Activated naive CD4-positive, alpha-beta T cell treated with anti-CD3 and anti-CD28 coated beads for 36 hours (primary cell): ENCODE measurements at regions of chr16 and their contacts with region 1.

Region 1: GRCh38 chr16:50665128-50665878 is 15.8 kb downstream of the SNX20 start:
- DNase-seq: peak; percentile 89
- H3K4me3 Mint-ChIP-seq: peak overlapping the region; percentile 57
- H3K27ac Mint-ChIP-seq: peak overlapping the region; percentile 72
- H3K4me1 Mint-ChIP-seq: peaks cover 29% of the 10 kb centered on the region
- H3K27me3 Mint-ChIP-seq: no peaks in the 10 kb centered on the region

Region 2: GRCh38 chr16:50266337-50267091 is 398.8 kb before region 1 on chr16 and contains the start of gene ADCY7:
- CTCF ChIA-PET with region 1: interaction called, 4 read pairs
- intact Hi-C with region 1: loop called (anchors 2 kb)
- DNase-seq: peak; percentile 91
- H3K4me3 Mint-ChIP-seq: peak within 1 kb of the TSS; percentile 86
- H3K27ac Mint-ChIP-seq: peak within 1 kb of the TSS; percentile 94
- H3K4me1 Mint-ChIP-seq: peaks cover 60% of the 10 kb centered on the region
- H3K27me3 Mint-ChIP-seq: peaks cover 3% of the 10 kb centered on the region
- total RNA-seq, gene ADCY7: 73.4 to 89.6 TPM

Region 3: DNA sequence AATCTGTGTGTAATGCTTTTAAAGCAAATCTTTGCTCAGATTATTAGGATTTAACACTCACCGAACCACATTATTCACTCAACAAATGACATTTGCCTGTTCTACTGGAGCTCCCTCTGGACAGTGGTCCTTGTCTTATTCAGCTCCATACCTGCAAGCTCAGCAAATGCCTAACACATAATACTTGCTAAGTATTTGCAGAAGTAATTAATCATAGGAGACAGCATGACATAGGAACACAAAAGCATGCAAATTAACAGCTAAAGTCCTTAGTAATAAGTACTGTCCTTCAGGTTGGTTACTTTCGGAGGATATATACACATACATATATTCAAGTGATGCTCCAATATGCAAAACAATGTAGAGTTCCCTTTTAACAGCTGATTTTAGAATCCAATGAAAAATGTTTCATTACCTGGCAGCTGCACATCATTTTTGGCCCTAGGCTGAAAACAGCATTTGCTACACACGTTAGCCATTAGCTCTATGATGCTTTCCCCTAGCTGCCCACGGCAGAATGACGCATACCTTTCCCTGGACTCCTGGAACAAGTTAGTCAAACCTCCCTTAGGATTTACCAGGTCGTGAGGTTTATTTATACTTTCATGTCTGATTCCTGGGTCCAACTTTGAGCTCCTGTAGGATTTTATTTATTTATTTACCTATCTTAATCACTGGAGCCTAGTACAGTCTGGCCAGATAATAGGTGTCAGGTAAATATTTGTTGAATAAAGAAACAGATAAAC is 305.1 kb before region 1 on chr16:
- CTCF ChIA-PET with region 1: interaction called, 18 read pairs
- intact Hi-C with region 1: no loop called
- DNase-seq: no peak
- H3K4me3 Mint-ChIP-seq: no peak overlapping the region
- H3K27ac Mint-ChIP-seq: no peak overlapping the region
- H3K4me1 Mint-ChIP-seq: peaks cover 48% of the 10 kb centered on the region
- H3K27me3 Mint-ChIP-seq: no peaks in the 10 kb centered on the region

Region 4: GRCh38 chr16:50419116-50419515 is 246.2 kb before region 1 on chr16:
- CTCF ChIA-PET with region 1: no interaction called
- intact Hi-C with region 1: no loop called
- DNase-seq: no peak
- H3K4me3 Mint-ChIP-seq: no peak overlapping the region
- H3K27ac Mint-ChIP-seq: no peak overlapping the region
- H3K4me1 Mint-ChIP-seq: no peaks in the 10 kb centered on the region
- H3K27me3 Mint-ChIP-seq: peaks cover 2% of the 10 kb centered on the region

Region 5: DNA sequence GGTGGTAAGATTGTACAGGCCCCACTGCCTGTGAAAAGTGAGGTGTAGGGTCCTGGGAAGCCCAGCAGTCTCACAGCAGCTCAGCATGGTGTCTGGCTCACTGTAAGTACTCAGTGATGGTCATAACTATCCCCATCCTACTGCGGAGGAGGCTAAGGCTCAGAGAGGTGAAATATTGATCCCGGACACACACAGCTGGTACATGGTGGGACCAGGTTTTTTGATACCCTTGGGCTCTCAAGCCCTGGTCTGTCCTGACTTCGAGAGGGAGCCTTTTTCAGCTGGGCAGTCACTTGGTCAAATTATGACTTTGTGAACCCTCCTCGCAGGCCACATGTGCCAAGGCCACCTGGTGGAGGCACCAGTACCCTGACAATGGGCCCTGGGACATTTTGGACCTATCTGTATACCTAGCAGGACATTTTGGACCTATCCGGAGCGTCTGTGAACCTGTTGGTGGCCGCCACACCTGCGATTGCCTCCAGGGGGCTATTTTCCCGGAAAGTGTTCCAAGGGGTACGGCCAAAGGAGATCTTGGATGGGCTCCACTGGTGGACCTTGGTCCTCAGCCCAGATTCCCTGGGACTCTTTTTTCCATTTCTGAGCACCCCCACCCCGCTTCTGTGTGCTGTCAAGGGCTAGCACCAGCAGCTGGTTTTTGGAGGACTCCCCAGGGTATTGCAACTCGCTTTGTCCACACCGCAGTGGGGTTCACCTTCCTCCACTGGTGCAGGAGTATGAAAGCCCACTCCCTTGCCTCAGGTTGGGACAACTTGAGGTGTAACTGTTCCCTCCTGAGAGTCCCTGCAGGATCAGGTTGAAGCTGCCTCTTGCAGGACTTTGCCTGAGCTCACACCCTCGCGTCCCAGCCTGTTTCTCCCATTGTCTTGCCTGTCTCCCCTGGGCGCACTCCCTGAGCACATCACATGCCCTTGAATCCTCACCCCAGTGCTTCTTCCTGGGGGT is 200.7 kb before region 1 on chr16:
- CTCF ChIA-PET with region 1: no interaction called
- intact Hi-C with region 1: no loop called
- DNase-seq: no peak
- H3K4me3 Mint-ChIP-seq: no peak overlapping the region
- H3K27ac Mint-ChIP-seq: no peak overlapping the region
- H3K4me1 Mint-ChIP-seq: peaks cover 4% of the 10 kb centered on the region
- H3K27me3 Mint-ChIP-seq: peaks cover 12% of the 10 kb centered on the region

Region 6: GRCh38 chr16:50548125-50548908 is 117.0 kb before region 1 on chr16 and contains the start of gene NKD1:
- CTCF ChIA-PET with region 1: interaction called, 4 read pairs
- intact Hi-C with region 1: loop called (anchors 1 kb)
- DNase-seq: peak; percentile 68
- H3K4me3 Mint-ChIP-seq: peak within 1 kb of the TSS; percentile 85
- H3K27ac Mint-ChIP-seq: no peak within 1 kb of the TSS
- H3K4me1 Mint-ChIP-seq: peaks cover 18% of the 10 kb centered on the region
- H3K27me3 Mint-ChIP-seq: no peaks in the 10 kb centered on the region
- total RNA-seq, gene NKD1: 2.6 to 3.2 TPM

Region 7: DNA sequence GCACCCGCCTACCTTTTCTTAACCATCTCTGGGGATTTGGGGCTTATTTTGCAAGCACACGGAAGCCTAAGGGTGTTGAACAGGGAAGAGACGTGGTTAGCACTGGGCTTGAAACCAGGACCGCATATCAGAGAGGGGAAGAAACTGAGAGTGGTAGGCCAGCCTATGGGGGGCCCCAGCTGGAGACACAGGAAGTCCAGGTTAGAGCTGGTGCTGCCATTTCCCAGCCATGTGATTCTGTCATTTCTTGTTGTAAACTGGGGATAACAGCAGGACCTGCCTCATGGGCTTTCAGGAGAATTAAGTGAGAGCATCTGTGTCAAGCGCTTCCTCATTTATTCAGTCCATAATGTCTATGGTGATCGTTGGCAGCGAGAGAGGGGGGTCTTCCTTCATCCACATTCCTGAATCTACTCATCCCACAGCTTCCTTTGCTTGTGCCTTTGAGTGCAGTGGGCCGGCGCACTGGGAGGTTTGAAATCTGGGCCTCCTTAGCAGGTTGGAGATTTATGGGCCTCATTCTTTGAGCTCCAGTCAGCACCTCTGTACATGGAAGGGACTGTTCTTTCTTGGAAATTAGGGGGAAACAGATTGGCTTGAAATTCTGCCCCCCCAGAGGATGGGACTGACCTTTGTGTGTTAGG is 97.0 kb before region 1 on chr16:
- CTCF ChIA-PET with region 1: no interaction called
- intact Hi-C with region 1: no loop called
- DNase-seq: no peak
- H3K4me3 Mint-ChIP-seq: no peak overlapping the region
- H3K27ac Mint-ChIP-seq: no peak overlapping the region
- H3K4me1 Mint-ChIP-seq: peaks cover 16% of the 10 kb centered on the region
- H3K27me3 Mint-ChIP-seq: no peaks in the 10 kb centered on the region

Region 8: GRCh38 chr16:50709053-50709684 is 43.9 kb after region 1 on chr16:
- CTCF ChIA-PET with region 1: interaction called, 12 read pairs
- intact Hi-C with region 1: no loop called
- DNase-seq: no peak
- H3K4me3 Mint-ChIP-seq: peak overlapping the region; percentile 41
- H3K27ac Mint-ChIP-seq: peak overlapping the region; percentile 77
- H3K4me1 Mint-ChIP-seq: peaks cover 43% of the 10 kb centered on the region
- H3K27me3 Mint-ChIP-seq: no peaks in the 10 kb centered on the region

Region 9: GRCh38 chr16:50776037-50776436 is 110.7 kb after region 1 on chr16:
- CTCF ChIA-PET with region 1: interaction called, 11 read pairs
- intact Hi-C with region 1: no loop called
- DNase-seq: peak; percentile 27
- H3K4me3 Mint-ChIP-seq: no peak overlapping the region
- H3K27ac Mint-ChIP-seq: no peak overlapping the region
- H3K4me1 Mint-ChIP-seq: peaks cover 70% of the 10 kb centered on the region
- H3K27me3 Mint-ChIP-seq: no peaks in the 10 kb centered on the region

Region 10: GRCh38 chr16:50859628-50860360 is 194.5 kb after region 1 on chr16:
- CTCF ChIA-PET with region 1: no interaction called
- intact Hi-C with region 1: no loop called
- DNase-seq: no peak
- H3K4me3 Mint-ChIP-seq: no peak overlapping the region
- H3K27ac Mint-ChIP-seq: no peak overlapping the region
- H3K4me1 Mint-ChIP-seq: no peaks in the 10 kb centered on the region
- H3K27me3 Mint-ChIP-seq: no peaks in the 10 kb centered on the region